Activated CD4-positive, alpha-beta memory T cell treated with anti-CD3 and anti-CD28 coated beads for 36 hours (primary cell): ENCODE measurements at regions of chr11 and their contacts with region 1.

Region 1: GRCh38 chr11:95150946-95151684 is 61.5 kb downstream of the ENDOD1 start:
- DNase-seq: peak; percentile 95
- H3K4me3 Mint-ChIP-seq: peak overlapping the region; percentile 81
- H3K27ac Mint-ChIP-seq: peak overlapping the region; percentile 88
- H3K4me1 Mint-ChIP-seq: peaks cover 36% of the 10 kb centered on the region
- H3K27me3 Mint-ChIP-seq: no peaks in the 10 kb centered on the region

Region 2: DNA sequence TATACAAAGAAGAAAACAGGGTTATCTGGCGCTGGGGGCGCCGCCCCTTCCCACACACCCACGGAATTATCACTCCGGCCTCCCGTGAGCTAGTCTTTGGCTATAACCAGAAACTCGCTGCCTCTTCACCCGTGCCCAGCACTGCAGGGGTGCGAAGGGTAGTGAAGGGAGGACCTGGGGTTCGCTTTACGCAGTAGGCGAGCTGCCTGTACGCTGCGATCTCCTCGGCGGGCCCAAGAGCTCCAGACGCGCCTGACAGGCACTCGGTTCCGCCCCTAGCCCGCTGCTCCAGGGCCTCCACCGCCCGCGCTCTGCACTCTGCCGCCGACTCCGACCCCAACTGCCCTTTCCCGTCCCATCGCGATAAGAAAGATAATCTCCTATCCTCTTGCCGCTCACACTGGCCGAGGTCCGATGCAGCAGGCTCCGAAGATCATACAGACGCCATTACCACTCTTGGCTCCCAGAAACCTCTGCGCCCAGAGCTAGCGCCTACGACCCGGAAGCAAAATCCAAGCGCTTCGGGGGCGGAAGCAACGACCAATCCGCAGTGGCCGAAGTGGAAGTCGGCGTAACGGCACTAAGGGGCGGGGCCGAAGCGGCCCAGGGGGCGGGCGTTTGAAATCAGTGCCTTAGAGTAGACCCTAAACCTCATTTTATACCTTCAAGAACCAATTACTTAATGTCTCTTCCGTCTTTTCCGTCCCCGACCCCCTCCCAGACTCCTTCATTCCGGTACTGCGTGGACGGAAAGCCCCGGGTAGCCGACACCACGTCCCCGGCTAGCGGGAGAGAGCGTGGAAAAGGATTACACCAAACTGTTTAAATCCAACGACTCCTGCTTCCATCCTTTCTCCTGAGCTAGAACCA is 177.8 kb before region 1 on chr11 and contains the starts of genes CWC15 and KDM4D:
- CTCF ChIA-PET with region 1: interaction called, 11 read pairs
- POLR2A ChIA-PET with region 1: interaction called, 3 read pairs
- intact Hi-C with region 1: loop called (anchors 1 kb)
- DNase-seq: peak; percentile 97
- H3K4me3 Mint-ChIP-seq: peak within 1 kb of the TSS; percentile 99
- H3K27ac Mint-ChIP-seq: peak within 1 kb of the TSS; percentile 86
- H3K4me1 Mint-ChIP-seq: peaks cover 34% of the 10 kb centered on the region
- H3K27me3 Mint-ChIP-seq: no peaks in the 10 kb centered on the region
- total RNA-seq, gene CWC15: 65.9 to 67.1 TPM
- total RNA-seq, gene KDM4D: 1.4 to 1.6 TPM

Region 3: GRCh38 chr11:95182397-95182796 is 31.3 kb after region 1 on chr11:
- CTCF ChIA-PET with region 1: interaction called, 16 read pairs
- POLR2A ChIA-PET with region 1: no interaction called
- intact Hi-C with region 1: no loop called
- DNase-seq: no peak
- H3K4me3 Mint-ChIP-seq: no peak overlapping the region
- H3K27ac Mint-ChIP-seq: peak overlapping the region; percentile 59
- H3K4me1 Mint-ChIP-seq: peaks cover 25% of the 10 kb centered on the region
- H3K27me3 Mint-ChIP-seq: no peaks in the 10 kb centered on the region

Region 4: GRCh38 chr11:95556342-95557163 is 405.4 kb after region 1 on chr11:
- CTCF ChIA-PET with region 1: interaction called, 16 read pairs
- POLR2A ChIA-PET with region 1: no interaction called
- intact Hi-C with region 1: loop called (anchors 2 kb)
- DNase-seq: peak; percentile 56
- H3K4me3 Mint-ChIP-seq: peak overlapping the region; percentile 38
- H3K27ac Mint-ChIP-seq: peak overlapping the region; percentile 90
- H3K4me1 Mint-ChIP-seq: peaks cover 27% of the 10 kb centered on the region
- H3K27me3 Mint-ChIP-seq: no peaks in the 10 kb centered on the region

Region 5: DNA sequence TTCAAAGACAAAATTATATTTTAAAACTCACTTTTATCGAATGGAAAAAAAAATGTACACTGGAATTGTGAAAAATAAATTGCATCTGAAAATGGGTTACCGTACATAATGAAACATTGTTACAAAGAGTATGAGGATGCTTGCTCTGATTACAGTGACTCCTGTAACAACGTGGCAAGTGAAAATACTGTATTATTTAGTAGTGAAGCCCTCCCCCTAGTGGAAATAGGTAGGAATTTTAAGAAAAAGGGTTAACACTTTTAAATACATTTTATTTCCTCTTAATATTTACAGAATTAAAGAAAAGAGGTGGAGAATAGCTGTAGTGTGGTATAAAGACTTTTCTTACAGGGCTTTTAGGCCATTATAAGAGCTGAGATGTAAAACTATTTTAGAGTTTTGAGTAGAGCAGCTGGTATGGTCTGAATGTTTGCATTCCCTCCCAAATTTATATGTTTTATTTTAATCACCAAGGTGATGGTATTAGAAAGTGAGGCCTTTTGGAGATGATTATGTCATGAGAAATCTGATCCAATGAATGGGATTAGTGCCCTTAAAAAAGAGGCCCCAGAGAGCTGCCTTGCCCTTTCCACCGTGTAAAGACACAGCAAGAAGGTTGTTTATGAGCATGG is 613.3 kb after region 1 on chr11:
- CTCF ChIA-PET with region 1: interaction called, 207 read pairs
- POLR2A ChIA-PET with region 1: no interaction called
- intact Hi-C with region 1: loop called (anchors 1 kb)
- DNase-seq: no peak
- H3K4me3 Mint-ChIP-seq: no peak overlapping the region
- H3K27ac Mint-ChIP-seq: no peak overlapping the region
- H3K4me1 Mint-ChIP-seq: no peaks in the 10 kb centered on the region
- H3K27me3 Mint-ChIP-seq: no peaks in the 10 kb centered on the region

Region 6: GRCh38 chr11:96389720-96390487 is 1238.8 kb after region 1 on chr11 and contains the starts of genes CCDC82 and JRKL:
- CTCF ChIA-PET with region 1: interaction called, 3 read pairs
- POLR2A ChIA-PET with region 1: no interaction called
- intact Hi-C with region 1: loop called (anchors 1 kb)
- DNase-seq: peak; percentile 99
- H3K4me3 Mint-ChIP-seq: peak within 1 kb of the TSS; percentile 86
- H3K27ac Mint-ChIP-seq: peak within 1 kb of the TSS; percentile 85
- H3K4me1 Mint-ChIP-seq: peaks cover 67% of the 10 kb centered on the region
- H3K27me3 Mint-ChIP-seq: no peaks in the 10 kb centered on the region
- total RNA-seq, gene CCDC82: 30.6 to 35.3 TPM
- total RNA-seq, gene JRKL: 13.7 to 15.4 TPM